Mammary epithelial cell (primary cell): ENCODE measurements at regions of chr11 and their contacts with region 1.

Region 1: DNA sequence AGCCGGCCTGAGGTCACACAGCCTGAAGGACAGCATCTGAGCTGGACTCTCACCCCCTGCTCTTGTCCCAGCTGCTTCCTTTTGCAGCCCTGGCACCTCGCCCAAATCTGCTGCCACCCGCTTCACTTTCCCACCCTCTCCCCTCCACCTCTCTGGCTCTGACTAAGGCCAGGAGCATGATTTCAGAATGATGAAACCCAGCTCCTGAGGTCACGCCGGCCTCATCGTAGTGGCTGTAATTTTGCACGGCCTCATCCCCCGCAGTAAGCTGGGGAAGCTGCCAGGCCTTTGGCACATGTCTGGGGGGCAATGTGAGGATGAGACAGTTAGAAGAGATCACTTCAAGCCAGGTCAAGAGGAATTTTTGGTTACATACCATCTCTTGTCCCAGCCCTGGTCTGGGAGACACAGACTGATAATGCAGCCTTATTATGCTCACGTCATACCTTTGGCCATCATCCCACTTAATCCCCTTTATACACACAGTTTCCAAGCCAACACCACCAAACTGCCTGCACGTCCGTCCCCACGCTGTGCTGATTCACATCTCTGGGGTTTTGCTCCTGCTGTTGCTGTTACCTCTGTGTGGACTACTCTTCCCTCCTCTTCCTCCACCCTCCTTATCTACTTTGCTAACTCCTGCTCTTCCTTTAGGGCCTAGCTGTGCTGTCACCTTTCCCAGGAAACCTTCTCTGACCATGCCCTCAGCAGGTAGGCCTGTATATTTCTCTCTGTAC is 58.1 kb downstream of the CHRDL2 start:
- DNase-seq: peak; percentile 88
- H3K4me3 ChIP-seq: no peak overlapping the region
- H3K27ac ChIP-seq: peak overlapping the region; percentile 77
- H3K4me1 ChIP-seq: peaks cover 21% of the 10 kb centered on the region
- H3K27me3 ChIP-seq: no peaks in the 10 kb centered on the region
- CTCF ChIP-seq: no peak

Region 2: DNA sequence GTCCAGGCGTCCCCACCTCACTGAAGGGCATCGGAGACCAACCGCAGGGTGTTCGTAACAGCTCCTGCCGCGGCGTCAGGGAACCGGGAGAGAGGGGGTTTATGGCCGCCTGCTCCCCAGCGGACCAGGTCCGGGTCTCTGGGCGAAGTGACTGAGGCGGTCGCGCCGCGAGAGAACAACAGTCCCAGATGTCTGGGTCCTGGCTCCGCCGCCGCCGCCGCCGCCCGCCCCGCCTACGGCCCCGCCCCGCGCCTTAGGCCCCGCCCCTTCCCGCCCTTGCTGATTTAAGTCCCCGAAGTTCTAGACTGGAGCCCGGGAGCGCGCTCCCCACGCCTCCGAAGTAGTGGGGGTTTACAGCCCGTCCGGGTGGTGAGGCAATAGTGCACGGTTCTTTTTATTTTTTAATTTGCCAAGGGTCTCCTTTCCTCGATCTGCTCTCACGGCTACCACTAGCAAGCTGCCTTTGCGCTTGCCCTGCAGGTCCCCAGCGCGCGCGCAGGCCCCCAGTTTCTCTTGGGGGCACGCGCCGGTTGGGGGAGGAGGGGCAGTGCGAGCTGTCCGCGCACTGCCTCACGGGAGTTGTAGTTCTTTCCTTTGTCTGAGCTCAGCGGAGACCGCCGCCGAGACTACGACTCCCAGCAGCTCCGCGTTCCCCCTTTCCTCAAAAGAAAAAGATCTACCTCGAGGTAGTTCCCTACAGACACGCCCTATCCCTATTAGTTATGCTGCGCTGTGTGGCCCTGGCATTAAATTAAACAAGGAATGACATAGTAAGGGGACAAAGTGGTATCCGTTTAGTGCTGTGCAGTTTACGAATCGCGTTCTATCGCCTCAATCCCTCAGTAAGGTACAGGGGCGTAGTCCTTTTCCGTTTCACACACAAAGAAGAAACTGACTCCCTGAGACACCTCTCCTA is 274.6 kb before region 1 on chr11 and contains the start of gene PGM2L1:
- CTCF ChIA-PET with region 1: no interaction called
- dilution Hi-C with region 1: no loop called
- in situ Hi-C with region 1: no loop called
- intact Hi-C with region 1: no loop called
- DNase-seq: peak; percentile 93
- H3K4me3 ChIP-seq: peak within 1 kb of the TSS; percentile 94 to 99 (median 96)
- H3K27ac ChIP-seq: peak within 1 kb of the TSS; percentile 79
- H3K4me1 ChIP-seq: no peaks in the 10 kb centered on the region
- H3K27me3 ChIP-seq: no peaks in the 10 kb centered on the region
- CTCF ChIP-seq: no peak
- total RNA-seq, gene PGM2L1: 6.6 to 9.0 TPM

Region 3: DNA sequence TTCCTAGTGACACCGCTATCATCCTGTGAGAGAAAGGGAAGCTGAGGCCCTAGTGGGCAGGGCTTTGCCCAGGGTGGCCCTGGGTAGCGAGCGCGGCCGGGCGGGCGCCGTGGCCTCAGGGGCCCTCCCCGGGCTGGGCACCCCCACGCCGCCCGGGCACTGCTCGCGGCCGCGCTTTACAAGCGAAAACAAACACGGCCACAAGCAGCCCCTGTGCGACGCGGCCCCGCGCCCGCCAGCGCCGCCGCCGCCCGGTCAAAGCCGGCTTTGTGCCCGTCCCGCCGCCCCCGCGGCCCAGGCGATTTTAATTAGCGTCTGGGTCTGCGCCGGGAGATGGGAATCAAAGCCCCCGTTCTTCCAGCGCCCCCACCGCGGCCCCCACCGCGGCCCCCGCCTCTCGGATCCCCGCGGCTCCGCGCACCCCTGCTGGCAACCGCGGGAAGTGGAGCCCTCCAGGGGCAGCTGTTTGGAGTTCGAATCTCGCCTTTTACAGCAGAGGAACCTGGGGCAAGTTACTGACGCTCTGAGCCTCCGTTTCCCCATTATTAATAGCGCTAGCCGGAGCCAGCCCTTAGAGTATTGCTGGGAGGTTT is 10.3 kb after region 1 on chr11:
- CTCF ChIA-PET with region 1: no interaction called
- dilution Hi-C with region 1: no loop called
- in situ Hi-C with region 1: no loop called
- intact Hi-C with region 1: loop called (anchors 2 kb)
- DNase-seq: no peak
- H3K4me3 ChIP-seq: peak overlapping the region; percentile 7 to 28 (median 9)
- H3K27ac ChIP-seq: no peak overlapping the region
- H3K4me1 ChIP-seq: peaks cover 6% of the 10 kb centered on the region
- H3K27me3 ChIP-seq: no peaks in the 10 kb centered on the region
- CTCF ChIP-seq: peak; percentile 11 to 49

Region 4: GRCh38 chr11:74696932-74697687 is 24.0 kb after region 1 on chr11:
- CTCF ChIA-PET with region 1: no interaction called
- dilution Hi-C with region 1: no loop called
- in situ Hi-C with region 1: no loop called
- intact Hi-C with region 1: no loop called
- DNase-seq: peak; percentile 76
- H3K4me3 ChIP-seq: no peak overlapping the region
- H3K27ac ChIP-seq: peak overlapping the region; percentile 31
- H3K4me1 ChIP-seq: peaks cover 24% of the 10 kb centered on the region
- H3K27me3 ChIP-seq: no peaks in the 10 kb centered on the region
- CTCF ChIP-seq: no peak

Region 5: DNA sequence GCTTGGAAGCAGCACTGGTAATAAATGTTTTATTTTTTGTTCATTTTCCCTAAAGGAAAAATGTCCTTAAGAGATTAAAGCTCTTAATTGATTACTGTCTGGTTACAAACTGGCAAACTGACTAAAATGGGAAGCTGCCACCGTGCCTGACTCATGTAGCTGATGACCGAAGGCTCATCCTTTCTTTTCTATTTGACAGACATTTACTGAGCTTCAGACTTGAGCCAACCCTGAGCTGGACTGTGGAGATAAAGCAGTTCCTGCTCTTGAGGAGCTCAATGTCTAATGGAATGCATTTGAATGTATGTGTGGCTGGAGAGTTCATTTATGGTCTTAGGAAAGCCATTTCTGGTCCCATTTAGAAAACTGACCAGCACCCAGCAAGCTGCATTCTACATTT is 166.8 kb after region 1 on chr11:
- CTCF ChIA-PET with region 1: no interaction called
- dilution Hi-C with region 1: no loop called
- in situ Hi-C with region 1: no loop called
- intact Hi-C with region 1: no loop called
- DNase-seq: no peak
- H3K4me3 ChIP-seq: no peak overlapping the region
- H3K27ac ChIP-seq: no peak overlapping the region
- H3K4me1 ChIP-seq: no peaks in the 10 kb centered on the region
- H3K27me3 ChIP-seq: no peaks in the 10 kb centered on the region
- CTCF ChIP-seq: no peak